ENCODE measurements at regions of chr6 and their contacts with region 1.

Region 1: DNA sequence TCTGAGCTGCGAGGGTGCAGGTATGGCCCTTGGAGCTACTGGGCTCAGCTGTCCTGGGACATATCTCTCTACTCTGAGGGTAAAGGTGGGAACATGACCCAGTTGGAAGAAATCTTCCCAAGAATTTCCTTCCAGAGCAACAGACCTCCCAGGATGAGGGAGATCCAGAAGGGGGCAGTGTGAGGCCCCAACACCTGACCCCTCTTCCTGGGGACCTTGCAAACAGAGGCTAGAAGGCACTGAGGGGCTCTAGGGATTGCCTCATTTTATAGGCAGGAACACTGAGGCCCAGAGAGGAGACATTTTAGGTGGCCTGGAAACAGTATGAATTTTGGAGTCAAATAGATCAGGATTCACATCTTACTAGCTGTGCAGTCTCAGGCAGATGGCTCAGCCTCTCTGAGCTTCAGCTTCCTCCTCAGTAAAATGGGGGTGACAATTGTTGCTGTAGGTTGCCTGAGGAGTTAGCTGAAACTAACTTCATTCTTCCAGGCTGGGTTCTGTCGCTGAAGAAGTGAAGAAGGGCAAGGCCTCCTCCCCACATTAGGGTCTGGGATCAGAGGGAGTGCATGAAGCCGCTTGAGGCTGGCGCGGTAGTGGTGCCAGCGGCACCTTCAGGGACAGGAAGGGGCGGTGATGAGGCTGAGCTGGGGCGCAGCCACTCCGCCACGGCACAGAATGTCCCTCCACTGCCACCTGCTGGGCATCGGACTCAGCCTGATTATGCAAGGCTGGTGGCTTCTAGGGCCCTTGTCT is 11.4 kb downstream of the KCNK17 start:
- DNase-seq: no peak
- H3K4me3 ChIP-seq: no peak overlapping the region
- CTCF ChIP-seq: peak; percentile 92

Region 2: GRCh38 chr6:38871741-38872568 is 430.9 kb before region 1 on chr6:
- CTCF ChIA-PET with region 1: interaction called, 53 read pairs
- POLR2A ChIA-PET with region 1: no interaction called
- DNase-seq: no peak
- H3K4me3 ChIP-seq: no peak overlapping the region
- CTCF ChIP-seq: peak; percentile 87

Region 3: GRCh38 chr6:38973178-38974054 is 329.4 kb before region 1 on chr6:
- CTCF ChIA-PET with region 1: interaction called, 43 read pairs
- POLR2A ChIA-PET with region 1: no interaction called
- DNase-seq: peak; percentile 19
- H3K4me3 ChIP-seq: no peak overlapping the region
- CTCF ChIP-seq: peak; percentile 39

Region 4: DNA sequence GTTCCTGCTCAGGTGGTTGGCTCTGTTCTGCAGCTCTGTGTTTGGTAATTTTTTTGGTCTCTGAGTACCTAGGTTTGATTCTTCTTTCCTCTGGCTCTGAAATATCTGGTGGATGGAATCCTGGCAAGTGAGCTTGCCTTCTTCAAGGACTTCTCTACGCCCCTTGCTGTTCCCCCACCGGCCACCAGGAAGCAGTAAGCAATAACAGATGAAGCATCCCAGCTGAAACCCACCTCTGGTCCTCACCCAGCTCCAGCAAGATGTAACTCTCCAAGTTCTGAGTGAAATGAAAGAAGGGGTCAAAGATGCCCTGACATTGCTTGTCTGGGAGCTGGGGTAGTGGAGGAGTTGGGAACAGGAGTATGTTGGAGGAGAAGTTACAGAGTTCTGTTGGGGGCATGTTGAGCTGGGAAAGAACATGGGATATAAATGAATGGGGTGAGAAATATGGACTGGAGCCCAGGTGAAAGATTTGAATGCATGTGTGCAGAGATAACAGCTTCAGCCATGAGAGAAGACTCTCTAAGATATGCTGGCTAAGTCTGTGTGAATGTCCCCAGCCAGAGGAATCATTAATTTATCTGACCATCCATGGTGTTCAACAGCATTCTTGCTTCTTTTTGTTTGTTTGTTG is 305.6 kb before region 1 on chr6:
- CTCF ChIA-PET with region 1: interaction called, 19 read pairs
- POLR2A ChIA-PET with region 1: no interaction called
- DNase-seq: no peak
- H3K4me3 ChIP-seq: no peak overlapping the region
- CTCF ChIP-seq: peak; percentile 39

Region 5: DNA sequence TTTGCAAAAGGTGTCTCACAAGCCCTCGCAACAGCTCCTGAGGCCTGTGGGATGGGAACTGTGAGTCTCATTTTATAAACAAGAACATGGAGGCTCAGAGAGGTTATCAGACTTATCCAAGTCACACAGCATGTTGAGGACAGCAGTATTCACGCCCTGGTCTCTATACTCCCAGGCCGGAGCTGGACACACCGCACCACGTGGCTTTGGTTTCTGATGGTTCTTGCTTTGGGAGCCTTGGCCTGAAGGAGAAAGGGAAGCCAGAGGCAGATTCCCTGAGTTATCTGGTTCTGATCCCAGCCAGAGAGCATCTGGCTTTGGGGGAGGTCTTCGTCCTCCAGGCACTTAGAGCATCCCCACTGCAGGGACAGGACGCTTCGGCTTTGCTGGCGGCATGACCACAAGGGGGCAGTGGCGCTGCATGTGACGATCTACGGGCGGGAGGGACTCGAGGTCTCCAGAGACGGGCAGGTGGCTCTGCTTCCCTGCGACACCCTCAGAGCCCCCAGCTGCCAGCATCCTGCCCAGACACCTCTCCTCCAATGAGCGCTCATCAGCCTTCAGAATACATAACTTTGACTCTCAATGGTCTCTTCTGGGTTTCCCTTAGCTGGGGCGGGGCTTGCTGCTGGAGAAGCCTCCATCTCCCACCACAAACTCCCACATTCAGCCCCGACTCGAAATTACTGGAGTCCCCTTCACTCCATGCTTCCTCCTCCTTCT is 136.5 kb before region 1 on chr6:
- CTCF ChIA-PET with region 1: interaction called, 107 read pairs
- POLR2A ChIA-PET with region 1: interaction called, 4 read pairs
- DNase-seq: no peak
- H3K4me3 ChIP-seq: no peak overlapping the region
- CTCF ChIP-seq: peak; percentile 86

Region 6: GRCh38 chr6:39218873-39219536 is 83.8 kb before region 1 on chr6:
- CTCF ChIA-PET with region 1: no interaction called
- POLR2A ChIA-PET with region 1: no interaction called
- DNase-seq: no peak
- H3K4me3 ChIP-seq: no peak overlapping the region
- CTCF ChIP-seq: no peak

Region 7: DNA sequence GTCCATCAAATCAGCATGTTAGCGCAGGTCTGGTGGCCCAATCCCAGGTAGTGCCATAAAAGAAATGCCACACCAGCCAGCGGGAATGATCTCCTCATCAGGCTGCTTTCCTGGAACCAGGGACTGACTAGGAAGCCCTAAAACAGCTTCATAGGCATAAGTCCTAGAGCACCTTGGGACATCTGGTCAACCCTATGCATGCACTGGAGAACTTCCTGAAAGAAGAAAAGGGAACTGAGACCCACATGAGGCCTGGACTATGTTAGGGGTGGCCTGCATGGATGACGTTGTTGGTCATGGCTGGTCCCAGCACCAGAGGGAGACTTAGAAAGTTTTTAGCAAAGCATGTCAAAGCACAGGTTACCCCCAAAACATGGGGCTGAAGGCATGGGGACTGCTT is 27.2 kb after region 1 on chr6:
- CTCF ChIA-PET with region 1: no interaction called
- POLR2A ChIA-PET with region 1: no interaction called
- DNase-seq: no peak
- H3K4me3 ChIP-seq: no peak overlapping the region
- CTCF ChIP-seq: no peak

Measured in AG04449 (cell line).